Psoas muscle (tissue), 8 donors: ENCODE measurements at regions of chr1 and their contacts with region 1.

Region 1: DNA sequence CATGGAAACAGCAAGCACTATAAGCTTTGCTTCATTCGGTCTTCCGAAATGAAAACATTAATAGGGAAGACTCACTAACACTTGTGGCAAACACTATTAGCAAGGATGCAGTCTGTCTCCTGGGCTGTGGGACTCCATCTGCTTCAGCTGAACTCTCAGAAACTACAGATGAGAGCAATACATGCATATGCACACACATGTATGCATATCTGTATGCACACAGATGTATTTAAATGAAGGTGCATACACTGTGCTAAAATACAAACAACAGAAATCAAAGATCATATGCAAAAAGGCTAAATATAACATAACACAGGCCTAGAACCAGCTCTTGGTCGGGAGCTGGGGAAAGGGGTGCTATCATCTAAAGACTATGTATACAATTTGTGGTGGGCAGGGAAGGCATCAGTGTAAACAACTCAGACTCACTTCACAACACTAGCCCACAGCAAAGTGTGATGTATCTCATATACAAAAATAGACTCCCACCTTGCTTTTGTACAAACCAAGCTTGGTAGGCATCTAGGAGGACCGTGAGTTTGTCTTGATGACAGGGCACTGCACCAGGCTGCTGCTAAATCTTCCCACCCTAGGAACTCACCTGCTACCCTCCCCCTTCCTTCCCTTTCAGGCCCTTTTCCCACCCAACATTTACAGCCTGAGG is 32.8 kb downstream of the CDC7 start:
- DNase-seq: no peak
- ATAC-seq: no peak
- H3K4me3 ChIP-seq: no peak overlapping the region
- H3K27ac ChIP-seq: no peak overlapping the region
- H3K4me1 ChIP-seq: no peaks in the 10 kb centered on the region
- H3K27me3 ChIP-seq: no peaks in the 10 kb centered on the region
- CTCF ChIP-seq: no peak

Region 2: DNA sequence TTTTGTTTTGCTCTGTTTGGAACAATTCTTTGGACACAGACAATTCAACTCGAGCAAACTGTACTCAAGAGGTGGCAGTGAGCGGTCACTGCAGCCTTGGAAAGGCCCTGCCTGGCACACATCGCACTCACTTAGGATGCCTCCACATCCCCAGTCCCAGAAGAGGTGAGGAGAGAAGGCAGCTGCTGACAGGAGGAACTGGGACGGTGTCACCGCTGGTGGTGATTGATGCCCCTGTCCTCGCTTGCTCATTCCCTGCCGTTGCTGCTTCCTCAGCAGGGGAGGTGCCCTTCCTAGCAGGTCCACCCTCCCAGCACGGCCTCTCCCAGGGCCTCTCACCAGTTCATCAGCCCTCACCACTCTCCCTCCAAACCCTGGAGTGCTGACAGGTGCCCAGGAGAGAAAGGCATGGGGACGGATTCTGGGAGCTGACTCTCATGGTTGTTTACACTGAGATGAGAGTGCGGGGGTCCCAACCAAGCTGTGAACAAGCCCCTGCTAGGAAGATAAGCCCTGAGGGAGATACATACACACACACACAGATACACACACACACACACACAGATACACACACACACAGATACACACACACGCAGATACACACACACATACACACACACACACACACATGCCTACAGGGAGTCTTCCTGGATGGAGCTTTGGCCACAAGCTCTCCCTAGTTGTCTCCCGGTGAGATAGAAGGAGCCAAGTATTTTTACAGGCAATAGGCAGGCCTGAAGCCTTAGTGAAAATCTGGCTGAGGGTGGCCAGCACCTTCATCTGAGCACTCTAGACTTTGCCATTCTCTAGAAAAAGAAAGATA is 68.3 kb after region 1 on chr1:
- intact Hi-C with region 1: loop called in 1 of 2 experiments (anchors 2 kb)
- DNase-seq: no peak
- ATAC-seq: peak in 1 of 4 donors; percentile 79
- H3K4me3 ChIP-seq: no peak overlapping the region
- H3K27ac ChIP-seq: no peak overlapping the region
- H3K4me1 ChIP-seq: no peaks in the 10 kb centered on the region
- H3K27me3 ChIP-seq: no peaks in the 10 kb centered on the region
- CTCF ChIP-seq: no peak